K562 (cell line): ENCODE measurements at regions of chr6 and their contacts with region 1.

Region 1: GRCh38 chr6:50791900-50792508 is 26.7 kb upstream of the TFAP2B start:
- DNase-seq: peak; percentile 60 to 69 (median 62)
- ATAC-seq: peak; percentile 90
- H3K4me3 ChIP-seq: no peak overlapping the region
- H3K27ac ChIP-seq: no peak overlapping the region
- H3K4me1 ChIP-seq: no peaks in the 10 kb centered on the region
- H3K27me3 ChIP-seq: no peaks in the 10 kb centered on the region
- CTCF ChIP-seq: peak; percentile 71 to 83 (median 74)
- EP300 ChIP-seq: no peak
- POLR2A ChIP-seq: no peak
- RAD21 ChIP-seq: peak; percentile 58 to 81

Region 2: DNA sequence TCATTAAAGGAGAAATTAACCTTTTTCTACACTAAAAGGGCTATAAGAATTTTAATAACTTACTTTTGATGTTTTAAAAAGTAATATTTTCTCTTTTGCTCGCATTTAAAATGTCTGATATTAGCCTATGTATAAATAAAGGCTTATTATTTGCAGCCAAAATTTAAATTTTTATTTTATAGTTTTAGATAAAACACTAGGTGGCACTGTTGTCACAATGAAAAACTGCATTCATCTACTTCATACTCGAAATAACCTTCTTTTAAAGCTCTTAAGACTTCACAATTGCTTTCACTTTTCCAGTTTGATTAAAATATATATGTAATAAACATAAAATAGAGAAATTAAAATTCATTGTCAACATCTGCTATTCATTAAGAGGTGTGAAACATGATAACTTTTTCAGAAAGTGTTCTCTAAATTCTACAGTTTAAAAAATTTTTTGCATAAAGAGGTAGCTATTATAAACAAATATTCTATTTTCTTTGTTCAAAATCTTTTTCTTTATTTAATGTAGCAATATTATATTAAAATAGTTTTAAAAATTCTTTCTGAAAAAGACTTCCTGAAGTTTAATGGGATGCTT is 663.5 kb before region 1 on chr6:
- CTCF ChIA-PET with region 1: interaction called, 6 read pairs
- POLR2A ChIA-PET with region 1: no interaction called
- in situ Hi-C with region 1: loop called (anchors 10 kb)
- intact Hi-C with region 1: loop called (anchors 1 kb)
- DNase-seq: peak; percentile 6 to 23 (median 20)
- ATAC-seq: no peak
- H3K4me3 ChIP-seq: no peak overlapping the region
- H3K27ac ChIP-seq: no peak overlapping the region
- H3K4me1 ChIP-seq: no peaks in the 10 kb centered on the region
- H3K27me3 ChIP-seq: no peaks in the 10 kb centered on the region
- CTCF ChIP-seq: peak in 1 of 3 experiments; percentile 64; a peak in 2 of 6 replicates
- EP300 ChIP-seq: no peak
- POLR2A ChIP-seq: no peak
- RAD21 ChIP-seq: peak; percentile 59 to 63

Region 3: GRCh38 chr6:50264995-50265571 is 526.9 kb before region 1 on chr6:
- CTCF ChIA-PET with region 1: interaction called, 3 read pairs
- POLR2A ChIA-PET with region 1: no interaction called
- in situ Hi-C with region 1: no loop called
- intact Hi-C with region 1: loop called (anchors 5 kb)
- DNase-seq: peak in 1 of 4 experiments; percentile 6
- ATAC-seq: no peak
- H3K4me3 ChIP-seq: no peak overlapping the region
- H3K27ac ChIP-seq: no peak overlapping the region
- H3K4me1 ChIP-seq: no peaks in the 10 kb centered on the region
- H3K27me3 ChIP-seq: no peaks in the 10 kb centered on the region
- CTCF ChIP-seq: peak in 1 of 3 experiments; percentile 13; a peak in 2 of 6 replicates
- EP300 ChIP-seq: no peak
- POLR2A ChIP-seq: no peak
- RAD21 ChIP-seq: no peak

Region 4: GRCh38 chr6:50655848-50656453 is 136.1 kb before region 1 on chr6:
- CTCF ChIA-PET with region 1: no interaction called
- POLR2A ChIA-PET with region 1: no interaction called
- in situ Hi-C with region 1: no loop called
- intact Hi-C with region 1: loop called (anchors 5 kb)
- DNase-seq: peak; percentile 17 to 44 (median 27)
- ATAC-seq: no peak
- H3K4me3 ChIP-seq: no peak overlapping the region
- H3K27ac ChIP-seq: no peak overlapping the region
- H3K4me1 ChIP-seq: no peaks in the 10 kb centered on the region
- H3K27me3 ChIP-seq: no peaks in the 10 kb centered on the region
- CTCF ChIP-seq: peak in 2 of 3 experiments; percentile 13 to 46; a peak in 4 of 6 replicates
- EP300 ChIP-seq: no peak
- POLR2A ChIP-seq: no peak
- RAD21 ChIP-seq: peak in 1 of 2 experiments; percentile 50; a peak in 2 of 4 replicates